PC-9 (cell line): ENCODE measurements at regions of chr2 and their contacts with region 1.

Region 1: DNA sequence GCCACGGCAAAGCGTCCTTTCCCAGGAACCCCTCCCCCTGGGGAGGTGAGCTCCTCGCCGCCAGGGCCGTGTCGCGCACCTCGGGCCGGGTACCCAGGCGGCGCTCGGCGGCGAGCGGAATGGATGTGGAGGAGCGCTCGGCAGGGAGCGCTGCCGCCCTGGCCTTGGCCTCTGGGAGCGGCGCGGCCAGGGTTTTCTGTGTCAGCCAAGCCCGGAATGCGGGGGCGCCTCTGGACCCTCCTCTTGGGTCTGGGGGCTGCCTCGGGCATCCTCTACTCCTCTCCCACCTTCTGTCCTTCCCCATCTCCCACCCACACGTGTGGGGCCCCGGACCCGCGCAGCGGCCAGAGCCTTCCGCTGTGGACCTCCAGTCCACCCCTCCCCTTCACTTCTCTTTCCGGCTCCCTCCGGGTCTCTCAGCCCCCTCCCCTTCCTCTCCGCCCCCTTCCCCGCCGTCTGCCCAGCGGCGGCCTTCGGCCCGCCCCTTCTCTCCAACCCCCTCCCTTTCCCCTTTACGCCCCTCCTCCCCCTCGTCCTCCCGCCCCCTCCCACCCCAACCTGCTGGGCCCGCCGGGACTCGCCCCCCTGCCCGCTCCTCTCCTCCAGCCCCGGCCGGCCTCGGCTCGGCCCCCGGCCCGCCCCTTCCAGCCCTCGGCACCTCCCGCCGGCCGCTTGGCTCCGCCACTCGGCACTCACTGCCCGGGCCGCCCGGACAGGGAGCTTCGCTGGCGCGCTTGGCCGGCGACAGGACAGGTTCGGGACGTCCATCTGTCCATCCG is at the start of gene MERTK:
- DNase-seq: peak; percentile 54 to 82
- H3K4me3 ChIP-seq: peak within 1 kb of the TSS; percentile 71
- H3K27ac ChIP-seq: no peak within 1 kb of the TSS
- H3K4me1 ChIP-seq: peaks cover 6% of the 10 kb centered on the region
- H3K27me3 ChIP-seq: no peaks in the 10 kb centered on the region
- CTCF ChIP-seq: peak; percentile 73
- total RNA-seq, gene MERTK: 1.6 and 3.4 TPM in 2 replicates

Region 2: GRCh38 chr2:111632661-111633060 is 265.5 kb before region 1 on chr2:
- CTCF ChIA-PET with region 1: no interaction called
- POLR2A ChIA-PET with region 1: no interaction called
- intact Hi-C with region 1: no loop called
- DNase-seq: no peak
- H3K4me3 ChIP-seq: no peak overlapping the region
- H3K27ac ChIP-seq: no peak overlapping the region
- H3K4me1 ChIP-seq: no peaks in the 10 kb centered on the region
- H3K27me3 ChIP-seq: no peaks in the 10 kb centered on the region
- CTCF ChIP-seq: no peak

Region 3: GRCh38 chr2:111919794-111920608 is 21.9 kb after region 1 on chr2:
- CTCF ChIA-PET with region 1: no interaction called
- POLR2A ChIA-PET with region 1: no interaction called
- intact Hi-C with region 1: no loop called
- DNase-seq: peak; percentile 66 to 91
- H3K4me3 ChIP-seq: no peak overlapping the region
- H3K27ac ChIP-seq: peak overlapping the region; percentile 59
- H3K4me1 ChIP-seq: peaks cover 41% of the 10 kb centered on the region
- H3K27me3 ChIP-seq: no peaks in the 10 kb centered on the region
- CTCF ChIP-seq: no peak

Region 4: DNA sequence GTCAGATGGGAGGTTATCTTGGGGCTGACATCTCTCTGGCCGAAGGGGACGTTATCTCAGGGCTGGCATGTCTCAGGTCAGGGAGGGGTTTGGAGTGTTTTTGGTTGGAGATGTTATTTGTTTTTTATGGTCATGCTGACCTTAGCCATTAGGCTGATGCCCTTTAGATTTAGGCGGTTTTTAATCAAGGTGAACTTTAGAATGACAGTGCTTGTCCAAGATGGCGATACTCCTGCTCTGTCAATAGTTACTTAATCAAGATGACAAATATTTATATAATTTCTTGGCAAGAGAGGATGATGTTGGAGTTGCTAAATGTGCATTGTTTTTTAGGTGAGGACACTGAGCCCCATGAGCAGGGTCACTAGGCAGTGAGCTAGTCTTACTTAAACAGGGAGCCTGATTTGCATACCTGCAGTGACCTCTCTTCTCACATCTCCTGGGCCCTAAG is 34.8 kb after region 1 on chr2:
- CTCF ChIA-PET with region 1: interaction called, 10 read pairs
- POLR2A ChIA-PET with region 1: no interaction called
- intact Hi-C with region 1: no loop called
- DNase-seq: no peak
- H3K4me3 ChIP-seq: no peak overlapping the region
- H3K27ac ChIP-seq: no peak overlapping the region
- H3K4me1 ChIP-seq: peaks cover 14% of the 10 kb centered on the region
- H3K27me3 ChIP-seq: no peaks in the 10 kb centered on the region
- CTCF ChIP-seq: no peak

Region 5: GRCh38 chr2:111946294-111947114 is 48.4 kb after region 1 on chr2:
- CTCF ChIA-PET with region 1: no interaction called
- POLR2A ChIA-PET with region 1: interaction called, 7 read pairs
- intact Hi-C with region 1: loop called (anchors 5 kb)
- DNase-seq: peak; percentile 74 to 100
- H3K4me3 ChIP-seq: peak overlapping the region; percentile 25; the same call in 1 of the 2 replicates
- H3K27ac ChIP-seq: peak overlapping the region; percentile 92
- H3K4me1 ChIP-seq: peaks cover 28% of the 10 kb centered on the region
- H3K27me3 ChIP-seq: no peaks in the 10 kb centered on the region
- CTCF ChIP-seq: no peak

Region 6: DNA sequence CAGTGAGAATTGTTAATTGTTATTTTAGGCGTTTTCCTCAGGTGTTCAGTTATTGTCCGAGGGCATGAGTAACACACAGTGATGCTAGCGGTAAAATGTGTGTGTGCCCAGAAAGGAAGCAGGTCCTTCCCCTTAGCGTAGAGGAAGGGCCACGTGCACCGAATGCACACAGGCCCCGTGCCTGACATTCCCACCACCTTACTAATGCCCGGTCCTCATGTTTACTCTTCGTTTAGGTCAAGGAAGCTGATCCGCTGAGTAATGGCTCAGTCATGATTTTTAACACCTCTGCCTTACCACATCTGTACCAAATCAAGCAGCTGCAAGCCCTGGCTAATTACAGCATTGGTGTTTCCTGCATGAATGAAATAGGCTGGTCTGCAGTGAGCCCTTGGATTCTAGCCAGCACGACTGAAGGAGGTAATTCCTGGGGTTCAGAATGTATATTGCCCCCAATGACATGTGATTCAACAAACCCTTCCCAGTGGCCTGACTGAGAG is 77.0 kb after region 1 on chr2:
- CTCF ChIA-PET with region 1: no interaction called
- POLR2A ChIA-PET with region 1: no interaction called
- intact Hi-C with region 1: loop called (anchors 2 kb)
- DNase-seq: peak; percentile 91 to 99
- H3K4me3 ChIP-seq: no peak overlapping the region
- H3K27ac ChIP-seq: peak overlapping the region; percentile 67
- H3K4me1 ChIP-seq: peaks cover 38% of the 10 kb centered on the region
- H3K27me3 ChIP-seq: no peaks in the 10 kb centered on the region
- CTCF ChIP-seq: no peak

Region 7: DNA sequence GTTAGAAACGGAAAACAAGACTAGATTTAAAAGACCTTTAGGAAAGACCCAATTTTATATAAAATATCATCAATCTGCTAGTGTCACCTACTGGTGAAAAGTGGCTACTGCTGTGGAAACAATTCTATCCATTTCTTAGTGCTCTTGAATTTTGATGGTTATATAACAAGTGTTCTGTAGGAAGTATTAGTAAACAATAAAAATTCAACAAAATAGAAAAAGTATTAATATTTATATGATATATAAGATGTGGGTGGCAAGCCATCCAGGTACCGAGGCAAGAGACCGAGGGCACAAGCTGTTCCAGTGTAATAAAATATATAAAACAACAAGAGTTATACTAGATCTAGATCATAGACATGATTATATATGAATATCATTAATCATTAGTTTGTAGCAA is 150.8 kb after region 1 on chr2:
- CTCF ChIA-PET with region 1: interaction called, 6 read pairs
- POLR2A ChIA-PET with region 1: interaction called, 3 read pairs
- intact Hi-C with region 1: loop called (anchors 1 kb)
- DNase-seq: peak; percentile 33 to 68
- H3K4me3 ChIP-seq: no peak overlapping the region
- H3K27ac ChIP-seq: no peak overlapping the region
- H3K4me1 ChIP-seq: peaks cover 7% of the 10 kb centered on the region
- H3K27me3 ChIP-seq: no peaks in the 10 kb centered on the region
- CTCF ChIP-seq: peak; percentile 89

Region 8: GRCh38 chr2:112087346-112088020 is 189.4 kb after region 1 on chr2:
- CTCF ChIA-PET with region 1: no interaction called
- POLR2A ChIA-PET with region 1: interaction called, 10 read pairs
- intact Hi-C with region 1: no loop called
- DNase-seq: no peak
- H3K4me3 ChIP-seq: no peak overlapping the region
- H3K27ac ChIP-seq: no peak overlapping the region
- H3K4me1 ChIP-seq: no peaks in the 10 kb centered on the region
- H3K27me3 ChIP-seq: no peaks in the 10 kb centered on the region
- CTCF ChIP-seq: no peak

Region 9: GRCh38 chr2:112465382-112465781 is 567.3 kb after region 1 on chr2:
- CTCF ChIA-PET with region 1: no interaction called
- POLR2A ChIA-PET with region 1: interaction called, 12 read pairs
- intact Hi-C with region 1: no loop called
- DNase-seq: no peak
- H3K4me3 ChIP-seq: no peak overlapping the region
- H3K27ac ChIP-seq: no peak overlapping the region
- H3K4me1 ChIP-seq: no peaks in the 10 kb centered on the region
- H3K27me3 ChIP-seq: peaks cover 5% of the 10 kb centered on the region; the same call in 1 of the 2 replicates
- CTCF ChIP-seq: 0 out of 2 replicates have a peak, but pooled peaks have one; percentile 23